Gastrocnemius medialis (tissue), 4 donors: ENCODE measurements at regions of chr10 and their contacts with region 1.

Region 1: DNA sequence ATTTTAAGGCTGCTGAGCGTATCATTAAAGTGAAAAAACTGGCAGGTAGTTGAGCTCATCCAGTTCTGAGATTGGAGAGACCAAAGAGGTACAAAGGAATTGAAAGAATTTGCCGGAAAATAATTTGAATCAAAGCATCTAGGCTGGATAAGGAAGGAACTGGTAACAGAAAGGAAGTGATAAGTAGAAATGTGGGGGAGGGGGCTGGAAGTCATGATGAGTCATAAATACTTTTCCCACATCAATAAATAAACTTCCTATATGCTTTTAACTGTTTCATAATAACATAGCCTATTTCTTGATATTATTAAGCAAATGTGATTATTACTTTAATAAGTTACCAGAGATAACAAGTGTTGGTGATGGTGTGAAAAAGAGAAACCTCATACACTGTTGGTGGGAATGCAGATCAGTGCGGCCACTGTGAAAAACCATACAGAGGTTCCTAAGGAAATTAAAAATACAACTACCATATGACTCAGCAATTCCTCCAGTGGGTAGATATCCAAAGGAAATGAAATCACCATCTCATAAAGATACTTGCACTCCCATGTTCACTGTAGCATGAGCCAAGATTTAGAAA is 27.0 kb downstream of the ZNF438 start:
- DNase-seq: no peak
- ATAC-seq: no peak
- H3K4me3 ChIP-seq: no peak overlapping the region
- H3K27ac ChIP-seq: peak overlapping the region; percentile 12 to 54 (median 44)
- H3K4me1 ChIP-seq: peaks cover 39 to 59% of the 10 kb centered on the region in 2 donors
- H3K27me3 ChIP-seq: no peaks in the 10 kb centered on the region
- CTCF ChIP-seq: no peak
- POLR2A ChIP-seq: no peak

Region 2: DNA sequence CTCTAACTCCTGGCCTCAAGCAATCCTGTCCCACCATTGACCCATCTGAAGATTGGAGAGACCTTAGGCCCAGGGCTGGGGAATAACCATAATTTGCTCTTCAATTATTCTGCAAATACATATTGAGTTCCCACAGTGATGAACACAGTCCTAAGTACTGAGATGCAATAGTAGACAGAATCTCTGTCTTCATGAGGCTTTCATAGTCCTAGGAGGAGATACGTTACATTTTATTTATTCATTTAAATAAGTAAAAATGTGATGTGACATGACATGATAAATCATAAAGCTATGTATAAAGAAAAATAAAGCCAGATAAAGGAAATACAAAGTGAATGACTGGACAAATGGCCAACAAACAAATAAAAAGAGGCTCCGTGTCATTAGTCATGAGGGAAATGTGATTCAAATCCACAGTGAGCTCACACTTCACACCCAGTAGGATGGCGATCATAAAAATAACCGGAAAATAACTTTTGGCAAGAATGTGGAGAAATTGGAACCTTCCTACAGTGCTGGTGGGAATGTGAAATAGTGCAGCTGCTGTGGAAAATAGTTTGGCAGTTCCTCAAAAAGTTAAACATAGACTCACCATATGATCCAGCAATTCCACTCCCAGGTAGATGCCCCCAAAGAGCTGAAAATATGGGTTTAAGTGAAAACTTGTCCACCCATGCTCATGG is 893.2 kb before region 1 on chr10:
- in situ Hi-C with region 1: no loop called
- intact Hi-C with region 1: no loop called
- DNase-seq: no peak
- ATAC-seq: no peak
- H3K4me3 ChIP-seq: no peak overlapping the region
- H3K27ac ChIP-seq: no peak overlapping the region
- H3K4me1 ChIP-seq: peaks cover 0 to 5% of the 10 kb centered on the region in 2 donors
- H3K27me3 ChIP-seq: no peaks in the 10 kb centered on the region
- CTCF ChIP-seq: no peak
- POLR2A ChIP-seq: no peak

Region 3: GRCh38 chr10:30959855-30960247 is 44.9 kb before region 1 on chr10:
- in situ Hi-C with region 1: no loop called
- intact Hi-C with region 1: no loop called
- DNase-seq: no peak
- ATAC-seq: no peak
- H3K4me3 ChIP-seq: no peak overlapping the region
- H3K27ac ChIP-seq: no peak overlapping the region
- H3K4me1 ChIP-seq: peaks cover 6 to 23% of the 10 kb centered on the region in 2 donors
- H3K27me3 ChIP-seq: no peaks in the 10 kb centered on the region
- CTCF ChIP-seq: no peak
- POLR2A ChIP-seq: no peak

Region 4: DNA sequence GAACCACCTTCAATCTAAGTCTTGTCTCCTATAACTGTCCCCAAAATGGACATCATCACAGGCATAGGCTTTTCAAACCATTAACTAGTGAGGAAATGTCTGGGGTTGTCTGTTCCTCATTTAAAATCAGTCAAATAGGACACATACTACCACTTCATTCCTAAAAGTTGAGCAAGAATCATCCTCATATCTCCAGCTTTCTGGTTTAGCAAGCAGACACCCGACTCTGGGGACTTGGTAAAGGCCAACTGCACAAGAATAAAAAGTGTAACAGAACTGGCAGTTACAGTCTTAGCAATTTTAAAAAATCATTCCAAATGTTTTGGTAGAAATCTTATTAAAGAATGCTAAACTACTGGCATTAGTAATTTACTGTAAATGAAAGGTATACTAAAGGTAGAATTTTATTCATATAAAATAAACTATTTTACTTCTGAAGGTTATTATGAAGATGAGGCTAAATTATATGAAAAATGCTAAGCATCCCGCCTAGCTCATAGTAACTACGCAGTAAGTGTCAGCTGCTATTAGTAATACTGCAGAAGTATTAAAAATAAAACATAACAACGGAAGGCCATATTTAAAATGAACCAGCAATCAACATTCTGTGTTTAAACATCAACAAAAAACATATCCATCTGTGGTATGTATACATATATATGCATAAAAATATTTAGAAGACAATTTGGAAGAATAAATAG is 33.8 kb before region 1 on chr10:
- in situ Hi-C with region 1: no loop called
- intact Hi-C with region 1: loop called (anchors 5 kb)
- DNase-seq: peak in 1 of 2 donors; percentile 63
- ATAC-seq: peak; percentile 16 to 47
- H3K4me3 ChIP-seq: peak overlapping the region in 2 of 4 donors; percentile 10 to 17
- H3K27ac ChIP-seq: peak overlapping the region; percentile 84 to 93 (median 89)
- H3K4me1 ChIP-seq: peaks cover 52 to 54% of the 10 kb centered on the region in 2 donors
- H3K27me3 ChIP-seq: no peaks in the 10 kb centered on the region
- CTCF ChIP-seq: no peak
- POLR2A ChIP-seq: no peak